Mammary epithelial cell (primary cell): ENCODE measurements at regions of chr1 and their contacts with region 1.

Region 1: DNA sequence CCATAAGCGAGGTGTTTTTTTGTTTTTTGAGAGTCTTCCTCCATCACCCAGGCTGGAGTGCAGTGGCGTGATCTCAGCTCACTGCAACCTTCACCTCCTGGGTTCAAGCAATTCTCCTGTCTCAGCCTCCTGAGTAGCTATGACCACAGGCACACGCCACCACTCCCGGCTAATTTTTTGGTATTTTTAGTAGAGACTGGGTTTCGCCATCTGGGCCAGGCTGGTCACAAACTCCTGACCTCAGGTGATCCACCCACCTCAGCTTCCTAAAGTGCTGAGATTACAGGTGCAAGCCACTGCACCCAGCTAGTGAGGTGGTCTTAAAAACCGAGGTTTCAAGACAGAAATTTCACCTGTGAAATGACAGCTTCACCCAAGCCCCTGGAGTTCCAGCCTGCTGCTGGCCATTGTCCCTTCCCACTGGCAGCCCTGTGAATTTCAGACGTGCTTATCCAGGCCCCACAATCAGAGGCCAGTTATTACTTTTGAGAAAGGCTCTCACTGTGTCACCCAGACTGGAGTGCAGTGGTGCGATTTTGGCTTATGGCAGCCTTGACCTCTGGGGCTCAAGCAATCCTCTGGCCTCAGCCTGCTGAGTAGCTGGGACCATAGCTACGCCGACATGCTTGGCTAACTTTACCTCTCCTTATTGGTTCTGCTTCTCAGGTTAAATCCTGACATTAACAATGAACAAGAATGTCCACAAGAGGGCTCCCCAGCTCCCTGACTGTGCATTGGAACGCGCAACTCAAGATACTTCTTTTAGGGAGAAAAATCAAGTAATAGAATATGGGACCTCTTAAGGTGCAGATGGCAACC is 19.4 kb downstream of the ENO1 start:
- DNase-seq: no peak
- H3K4me3 ChIP-seq: no peak overlapping the region
- H3K27ac ChIP-seq: no peak overlapping the region
- H3K4me1 ChIP-seq: peaks cover 21% of the 10 kb centered on the region
- H3K27me3 ChIP-seq: no peaks in the 10 kb centered on the region
- CTCF ChIP-seq: peak; percentile 64 to 65

Region 2: DNA sequence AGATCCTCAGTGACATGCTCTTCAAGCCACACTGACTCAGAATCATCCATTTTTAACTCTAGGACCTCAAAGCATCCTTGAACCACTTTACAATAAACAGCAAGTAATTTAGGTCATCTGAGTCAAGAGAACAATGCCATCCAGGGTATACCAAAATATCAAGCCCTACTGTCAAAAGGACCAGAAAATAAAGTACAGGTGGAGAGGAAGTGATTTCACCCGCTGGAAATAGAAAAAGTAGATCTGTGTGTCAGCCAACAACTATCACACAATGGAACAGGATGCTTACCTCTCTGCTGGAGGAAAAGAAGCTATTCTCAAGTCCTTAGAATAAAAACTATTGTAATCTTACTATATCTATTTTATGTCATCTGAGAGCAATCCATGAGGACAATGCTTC is 78.7 kb before region 1 on chr1:
- CTCF ChIA-PET with region 1: no interaction called
- dilution Hi-C with region 1: no loop called
- in situ Hi-C with region 1: no loop called
- intact Hi-C with region 1: no loop called
- DNase-seq: no peak
- H3K4me3 ChIP-seq: no peak overlapping the region
- H3K27ac ChIP-seq: no peak overlapping the region
- H3K4me1 ChIP-seq: no peaks in the 10 kb centered on the region
- H3K27me3 ChIP-seq: no peaks in the 10 kb centered on the region
- CTCF ChIP-seq: no peak

Region 3: DNA sequence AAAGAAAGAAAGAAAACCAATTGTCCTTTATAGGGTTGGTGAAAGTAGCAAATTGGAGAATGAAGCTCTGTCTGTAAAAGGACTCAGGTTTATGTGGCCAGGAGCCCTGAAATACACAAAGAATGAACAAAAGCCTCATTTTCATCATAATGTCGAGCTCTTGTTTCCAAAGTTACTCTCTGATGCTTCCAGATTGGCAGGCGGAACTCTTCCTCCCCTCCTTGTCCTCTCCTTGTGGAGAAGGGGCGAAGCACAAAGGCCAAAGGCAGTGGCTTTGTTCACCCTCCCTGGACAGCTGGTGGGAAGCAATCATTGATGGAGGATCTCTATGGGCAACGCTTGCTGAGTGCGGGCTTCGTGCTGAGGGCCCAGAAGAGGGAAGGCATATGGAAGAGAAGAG is 92.1 kb after region 1 on chr1:
- CTCF ChIA-PET with region 1: no interaction called
- dilution Hi-C with region 1: loop called (anchors 5 kb)
- in situ Hi-C with region 1: no loop called
- intact Hi-C with region 1: no loop called
- DNase-seq: no peak
- H3K4me3 ChIP-seq: no peak overlapping the region
- H3K27ac ChIP-seq: no peak overlapping the region
- H3K4me1 ChIP-seq: no peaks in the 10 kb centered on the region
- H3K27me3 ChIP-seq: no peaks in the 10 kb centered on the region
- CTCF ChIP-seq: no peak